ENCODE measurements at regions of chr18 and their contacts with region 1.

Region 1: GRCh38 chr18:21463718-21464117 is 136.8 kb downstream of the ESCO1 start:
- DNase-seq: no peak
- H3K4me3 ChIP-seq: no peak overlapping the region
- CTCF ChIP-seq: no peak
- POLR2A ChIP-seq: no peak

Region 2: GRCh38 chr18:21406111-21406510 is 57.6 kb before region 1 on chr18:
- intact Hi-C with region 1: no loop called
- DNase-seq: no peak
- H3K4me3 ChIP-seq: no peak overlapping the region
- CTCF ChIP-seq: no peak
- POLR2A ChIP-seq: no peak

Region 3: DNA sequence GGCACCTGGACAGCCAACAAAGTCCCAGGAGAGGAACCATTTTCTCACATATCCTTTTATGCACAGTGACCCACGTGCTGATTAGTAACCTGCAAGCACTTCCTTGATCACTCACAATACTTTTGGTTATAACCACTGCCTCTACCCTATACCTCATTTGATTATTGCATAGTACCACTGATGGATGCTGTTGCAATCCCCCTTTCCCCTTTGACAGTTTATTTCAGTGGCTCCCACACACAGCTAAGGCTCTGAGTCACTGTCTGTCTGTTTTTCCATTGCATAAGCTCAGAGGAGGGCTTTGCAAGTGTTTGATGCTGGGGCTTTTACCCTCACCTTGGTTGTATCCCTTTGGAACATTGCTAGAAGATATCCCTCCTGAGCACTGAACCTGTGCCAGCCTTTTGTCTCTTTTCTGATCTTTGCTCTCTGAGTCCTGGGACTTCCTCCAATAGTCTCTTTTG is 1367.8 kb after region 1 on chr18:
- intact Hi-C with region 1: loop called (anchors 10 kb)
- DNase-seq: no peak
- H3K4me3 ChIP-seq: no peak overlapping the region
- CTCF ChIP-seq: no peak
- POLR2A ChIP-seq: no peak

Measured in lower leg skin (tissue), 4 donors.